ENCODE measurements at regions of chr2 and their contacts with region 1.

Region 1: DNA sequence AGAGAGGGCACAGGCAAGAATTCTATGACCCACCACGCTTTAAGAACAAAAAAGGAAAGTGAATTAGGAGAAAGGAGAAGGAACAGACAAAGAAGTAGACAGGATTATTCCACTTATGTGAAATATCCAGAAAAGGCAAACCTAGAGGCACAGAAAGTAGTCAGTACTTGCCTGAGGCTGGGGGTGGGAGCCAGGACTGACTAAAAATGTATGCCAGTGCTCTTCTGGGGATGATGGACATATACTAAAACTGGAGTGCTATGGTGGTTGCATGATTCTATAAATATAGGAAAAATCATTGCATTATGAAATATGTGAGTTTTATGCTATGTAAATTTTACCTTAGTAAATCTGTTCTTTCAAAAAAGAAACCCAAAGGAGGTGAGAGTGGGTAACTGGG is 73.9 kb upstream of the TTN start:
- DNase-seq: no peak
- H3K4me3 ChIP-seq: no peak overlapping the region
- CTCF ChIP-seq: no peak

Region 2: GRCh38 chr2:178891265-178891958 is 10.3 kb after region 1 on chr2:
- CTCF ChIA-PET with region 1: interaction called, 12 read pairs
- POLR2A ChIA-PET with region 1: no interaction called
- DNase-seq: no peak
- H3K4me3 ChIP-seq: no peak overlapping the region
- CTCF ChIP-seq: peak; percentile 74

Measured in AG04449 (cell line).